ENCODE measurements at regions of chr1 and their contacts with region 1.

Region 1: DNA sequence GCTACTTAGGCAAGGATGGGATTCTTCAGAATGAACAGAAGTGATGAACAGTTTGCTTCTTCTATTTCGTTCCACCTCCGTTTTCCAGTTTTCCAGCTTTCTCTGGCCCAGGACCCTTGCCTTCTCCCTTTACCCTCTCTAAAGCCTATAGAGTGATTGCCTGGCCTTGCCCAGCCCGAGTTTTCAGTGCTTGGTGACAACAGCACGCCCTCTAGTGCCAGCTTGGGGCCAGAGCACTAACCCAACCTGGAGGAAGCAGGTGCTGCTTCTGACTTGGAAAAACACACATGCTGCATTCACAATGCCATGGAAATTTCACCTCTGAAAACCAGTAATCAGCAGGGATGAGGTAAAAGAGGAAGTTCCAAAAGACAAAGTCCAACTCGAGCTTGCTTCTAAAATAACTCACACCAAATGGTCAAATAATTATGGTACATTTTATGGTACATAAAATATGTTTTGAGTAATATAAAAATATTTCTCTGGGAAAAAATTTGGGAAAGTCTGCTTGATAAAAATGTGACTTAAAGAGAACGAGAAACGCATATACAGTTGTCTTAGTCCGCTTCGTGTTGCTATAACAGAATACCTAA is 26.1 kb downstream of the UBE2T start:
- DNase-seq: peak; percentile 82
- CTCF ChIP-seq: peak; percentile 94

Region 2: GRCh38 chr1:202164271-202165037 is 151.2 kb before region 1 on chr1:
- in situ Hi-C with region 1: no loop called
- DNase-seq: peak; percentile 90
- CTCF ChIP-seq: no peak

Region 3: GRCh38 chr1:202184750-202185460 is 130.8 kb before region 1 on chr1:
- in situ Hi-C with region 1: loop called (anchors 10 kb)
- DNase-seq: peak; percentile 79
- CTCF ChIP-seq: peak; percentile 87

Measured in GM13976 (cell line).